CD4-positive, alpha-beta T cell (primary cell): ENCODE measurements at regions of chr4 and their contacts with region 1.

Region 1: GRCh38 chr4:41148292-41148691 is 66.0 kb downstream of the APBB2 start:
- DNase-seq: no peak
- ATAC-seq: no peak
- H3K4me3 ChIP-seq: no peak overlapping the region
- H3K4me3 Mint-ChIP-seq: no peak overlapping the region
- H3K27ac ChIP-seq: no peak overlapping the region
- H3K27ac Mint-ChIP-seq: no peak overlapping the region
- H3K4me1 ChIP-seq: no peaks in the 10 kb centered on the region
- H3K4me1 Mint-ChIP-seq: no peaks in the 10 kb centered on the region
- H3K27me3 ChIP-seq: no peaks in the 10 kb centered on the region
- H3K27me3 Mint-ChIP-seq: peaks cover 21% of the 10 kb centered on the region
- CTCF ChIP-seq: no peak

Region 2: DNA sequence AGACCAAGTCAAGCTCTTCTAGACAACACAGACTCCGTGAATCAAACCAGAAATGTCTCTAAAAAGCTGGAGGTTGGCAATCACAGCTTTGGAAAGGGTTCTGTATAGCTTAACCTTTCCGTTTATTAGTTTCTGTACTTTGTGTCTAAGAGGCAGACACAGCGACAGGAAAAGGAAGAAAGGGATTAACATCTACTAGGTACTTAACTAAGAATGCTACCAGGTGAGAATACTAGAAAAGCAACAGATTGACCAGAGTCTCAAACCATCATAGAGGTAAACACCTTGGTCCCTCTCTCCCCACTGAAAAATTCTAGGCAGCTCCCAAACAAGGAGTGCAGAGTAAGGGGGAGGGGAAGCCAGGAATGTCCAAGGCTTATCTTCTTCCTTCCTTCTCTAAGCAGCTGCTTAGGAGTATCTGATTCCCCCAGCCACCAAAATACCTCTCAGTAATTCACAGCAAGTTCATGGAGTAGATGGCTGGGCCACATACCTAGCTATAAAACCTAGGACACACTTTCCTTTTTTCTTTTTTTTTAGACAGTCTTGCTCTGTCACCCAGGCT is 14.8 kb before region 1 on chr4:
- CTCF ChIA-PET with region 1: no interaction called
- POLR2A ChIA-PET with region 1: no interaction called
- intact Hi-C with region 1: loop called in 1 of 2 experiments (anchors 2 kb)
- DNase-seq: no peak
- ATAC-seq: no peak
- H3K4me3 ChIP-seq: no peak overlapping the region
- H3K4me3 Mint-ChIP-seq: no peak overlapping the region
- H3K27ac ChIP-seq: no peak overlapping the region
- H3K27ac Mint-ChIP-seq: no peak overlapping the region
- H3K4me1 ChIP-seq: no peaks in the 10 kb centered on the region
- H3K4me1 Mint-ChIP-seq: no peaks in the 10 kb centered on the region
- H3K27me3 ChIP-seq: peaks cover 0 to 7% of the 10 kb centered on the region in 2 experiments
- H3K27me3 Mint-ChIP-seq: peaks cover 22% of the 10 kb centered on the region
- CTCF ChIP-seq: no peak